Sciatic nerve (tissue), 2 donors: ENCODE measurements at regions of chr1 and their contacts with region 1.

Region 1: DNA sequence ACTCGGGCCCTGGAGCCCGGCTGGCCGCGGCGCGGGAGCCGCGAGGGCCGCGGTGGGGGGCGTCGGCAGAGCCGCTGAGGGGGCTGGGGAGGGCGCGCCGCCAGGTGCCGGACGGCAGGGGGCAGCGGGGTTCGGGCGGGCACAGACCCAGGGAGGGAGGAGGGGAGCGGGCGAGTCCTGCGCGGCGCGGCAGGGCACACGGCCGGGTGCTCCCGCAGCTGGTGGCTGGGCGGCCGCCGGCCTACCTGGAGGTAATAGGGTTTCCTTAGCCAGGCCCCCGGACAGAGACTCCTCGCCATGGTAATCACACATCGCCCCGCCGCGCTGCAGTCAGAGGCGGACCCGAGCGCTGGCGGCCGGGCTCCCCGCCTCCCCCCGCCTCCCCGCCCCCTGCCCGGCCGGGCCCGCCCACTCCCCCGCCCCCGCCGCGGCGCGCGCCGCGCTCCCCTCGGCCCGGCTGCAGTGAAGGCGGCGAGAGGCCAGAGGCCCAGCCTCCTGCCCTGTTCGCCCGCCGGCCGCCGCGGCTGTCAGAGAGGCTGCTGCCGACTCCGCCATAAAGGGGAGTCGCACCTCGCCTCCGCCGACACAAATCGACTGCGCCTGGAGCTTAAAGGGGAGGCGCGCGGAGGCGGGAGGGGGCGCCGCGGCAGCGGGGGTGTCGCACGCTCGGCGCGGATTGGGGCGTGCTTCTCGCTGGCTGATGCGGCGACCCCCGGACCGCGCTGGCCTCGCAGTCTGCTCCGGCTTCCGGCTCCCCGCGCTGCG is at the start of gene DIPK1A:
- DNase-seq: peak; percentile 83
- ATAC-seq: peak; percentile 77
- total RNA-seq, gene DIPK1A: 6.6 TPM

Region 2: DNA sequence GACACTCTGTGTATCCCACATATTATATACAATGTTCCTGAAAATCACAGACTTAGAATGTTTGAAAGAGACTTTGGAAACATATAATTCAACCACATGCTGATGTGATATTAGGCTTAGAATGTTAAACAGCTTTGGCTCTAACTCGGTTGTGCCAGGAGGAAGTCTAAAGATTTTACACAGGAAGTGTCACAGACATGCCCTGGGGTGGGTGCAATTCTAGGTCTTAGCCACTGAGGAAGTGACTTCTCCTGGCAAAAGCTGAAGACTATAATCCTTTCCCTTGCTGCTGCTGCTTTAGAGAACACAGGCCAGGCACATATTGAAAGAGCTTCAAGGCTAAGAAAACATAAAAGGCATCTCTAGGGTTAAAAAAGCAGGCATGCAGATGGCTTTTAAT is 78.5 kb before region 1 on chr1:
- intact Hi-C with region 1: loop called (anchors 2 kb)
- DNase-seq: no peak
- ATAC-seq: no peak